Naive thymus-derived CD4-positive, alpha-beta T cell (primary cell): ENCODE measurements at regions of chr3 and their contacts with region 1.

Region 1: GRCh38 chr3:172814738-172815137 is 64.2 kb downstream of the ECT2 start:
- DNase-seq: no peak
- ATAC-seq: no peak
- H3K4me3 ChIP-seq: no peak overlapping the region
- H3K4me3 Mint-ChIP-seq: no peak overlapping the region
- H3K27ac ChIP-seq: no peak overlapping the region
- H3K27ac Mint-ChIP-seq: no peak overlapping the region
- H3K4me1 ChIP-seq: no peaks in the 10 kb centered on the region
- H3K4me1 Mint-ChIP-seq: no peaks in the 10 kb centered on the region
- H3K27me3 ChIP-seq: no peaks in the 10 kb centered on the region
- H3K27me3 Mint-ChIP-seq: no peaks in the 10 kb centered on the region

Region 2: DNA sequence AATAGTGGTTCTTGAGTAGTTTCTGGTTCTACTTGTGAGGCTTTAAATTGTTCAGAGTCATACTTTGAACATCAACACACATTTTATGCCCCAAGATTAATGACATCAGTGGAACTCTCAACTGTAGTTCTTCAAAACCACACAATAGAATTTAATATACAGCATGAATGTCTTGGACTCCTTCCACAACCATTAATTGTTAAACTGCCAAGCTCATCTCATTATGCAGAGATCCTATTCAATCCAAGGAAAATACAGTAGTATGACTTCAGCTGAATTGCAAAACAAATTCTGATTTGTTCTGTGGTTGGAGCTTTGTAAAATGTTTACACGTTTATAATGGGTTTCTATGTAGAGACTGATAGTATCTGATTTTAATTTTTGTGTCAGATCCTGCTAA is 1589.0 kb before region 1 on chr3:
- CTCF ChIA-PET with region 1: no interaction called
- POLR2A ChIA-PET with region 1: no interaction called
- intact Hi-C with region 1: no loop called
- DNase-seq: no peak
- ATAC-seq: no peak
- H3K4me3 ChIP-seq: no peak overlapping the region
- H3K4me3 Mint-ChIP-seq: peak overlapping the region in 2 of 10 donors; percentile 41 to 48
- H3K27ac ChIP-seq: no peak overlapping the region
- H3K27ac Mint-ChIP-seq: peak overlapping the region in 6 of 9 donors; percentile 21 to 73 (median 56)
- H3K4me1 ChIP-seq: peaks cover 6 to 11% of the 10 kb centered on the region in 2 donors
- H3K4me1 Mint-ChIP-seq: peaks cover 3 to 72% (median 60%) of the 10 kb centered on the region in 7 donors
- H3K27me3 ChIP-seq: no peaks in the 10 kb centered on the region
- H3K27me3 Mint-ChIP-seq: no peaks in the 10 kb centered on the region

Region 3: DNA sequence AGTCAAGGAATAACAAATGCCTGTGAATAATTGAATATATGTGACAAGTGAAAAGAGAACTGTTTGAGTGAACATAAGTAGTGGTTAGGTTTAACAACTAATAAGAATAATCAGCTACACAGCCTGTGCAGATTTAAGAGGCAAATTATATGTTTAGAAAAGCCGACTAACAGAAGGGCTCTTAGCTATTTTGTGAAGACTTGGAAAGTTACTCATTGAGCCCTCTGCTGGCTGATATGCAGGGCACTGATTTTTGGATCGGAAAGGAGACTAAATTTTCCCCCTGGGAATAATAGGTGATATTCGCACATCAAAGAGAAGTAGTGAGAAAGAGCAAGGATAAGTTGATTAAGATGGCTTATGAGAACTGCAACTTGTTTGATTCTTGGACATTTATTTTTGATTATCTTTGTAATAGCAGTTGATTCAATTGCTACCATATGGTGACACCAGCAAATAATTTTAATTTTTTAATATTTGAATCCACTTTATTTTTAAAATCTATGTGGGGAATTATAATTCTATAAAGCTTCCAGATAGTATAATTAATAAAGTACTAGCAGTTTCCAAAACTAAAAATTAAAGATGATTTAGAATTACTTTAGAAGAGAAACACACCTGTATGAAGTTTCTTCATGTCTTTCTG is 739.0 kb after region 1 on chr3:
- CTCF ChIA-PET with region 1: no interaction called
- POLR2A ChIA-PET with region 1: no interaction called
- intact Hi-C with region 1: loop called in 1 of 2 experiments (anchors 10 kb)
- DNase-seq: no peak
- ATAC-seq: no peak
- H3K4me3 ChIP-seq: no peak overlapping the region
- H3K4me3 Mint-ChIP-seq: no peak overlapping the region
- H3K27ac ChIP-seq: no peak overlapping the region
- H3K27ac Mint-ChIP-seq: no peak overlapping the region
- H3K4me1 ChIP-seq: no peaks in the 10 kb centered on the region
- H3K4me1 Mint-ChIP-seq: no peaks in the 10 kb centered on the region
- H3K27me3 ChIP-seq: no peaks in the 10 kb centered on the region
- H3K27me3 Mint-ChIP-seq: no peaks in the 10 kb centered on the region